Activated CD4-positive, alpha-beta T cell treated with anti-CD3 and anti-CD28 coated beads for 36 hours (primary cell): ENCODE measurements at regions of chr17 and their contacts with region 1.

Region 1: GRCh38 chr17:76737082-76737675 is at the start of gene SRSF2:
- DNase-seq: peak; percentile 99
- ATAC-seq: peak; percentile 75
- H3K4me3 Mint-ChIP-seq: peak within 1 kb of the TSS; percentile 85
- H3K27ac Mint-ChIP-seq: peak within 1 kb of the TSS; percentile 98
- H3K4me1 Mint-ChIP-seq: peaks cover 40% of the 10 kb centered on the region
- H3K27me3 Mint-ChIP-seq: no peaks in the 10 kb centered on the region
- total RNA-seq, gene SRSF2: 335 to 340 TPM

Region 2: DNA sequence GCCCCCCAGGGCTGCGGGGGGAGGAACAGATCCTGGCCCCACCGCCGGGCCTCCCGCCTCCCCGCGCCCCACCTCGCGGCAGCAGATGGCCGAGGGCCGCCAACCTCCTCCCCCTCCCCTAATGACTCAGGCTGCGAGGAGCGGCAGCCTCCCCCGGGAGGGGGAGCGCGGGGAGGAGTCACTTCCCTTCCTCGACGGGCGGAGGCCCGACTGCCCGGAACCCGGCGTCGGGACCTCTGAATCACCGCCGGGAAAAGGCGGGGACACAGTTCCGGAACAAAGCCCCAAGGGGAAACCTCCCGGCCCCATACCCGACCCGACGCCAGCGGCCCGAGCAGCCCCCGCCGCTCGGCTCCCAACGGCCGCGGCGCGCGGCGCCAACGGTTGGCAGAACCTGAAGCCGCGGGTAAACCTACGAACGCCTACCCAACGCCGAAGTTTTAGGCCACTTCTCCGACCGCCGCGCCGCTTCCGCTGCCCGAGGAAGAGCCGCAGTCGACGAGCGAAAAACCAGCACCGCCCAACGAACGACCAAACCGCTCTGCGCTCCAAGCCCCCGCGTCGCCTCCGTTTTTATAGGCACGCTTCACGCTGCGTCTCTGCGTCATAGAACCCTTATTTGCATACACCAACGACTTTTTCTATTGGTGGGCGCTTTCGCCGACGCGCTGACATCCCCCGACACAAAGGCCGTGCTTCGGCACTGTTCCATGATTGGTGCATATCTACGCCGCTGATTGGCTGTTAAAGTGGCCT is 957.8 kb before region 1 on chr17:
- CTCF ChIA-PET with region 1: no interaction called
- POLR2A ChIA-PET with region 1: no interaction called
- intact Hi-C with region 1: loop called (anchors 1 to 5 kb)
- DNase-seq: peak; percentile 96
- ATAC-seq: peak; percentile 69
- H3K4me3 Mint-ChIP-seq: peak overlapping the region; percentile 98
- H3K27ac Mint-ChIP-seq: peak overlapping the region; percentile 99
- H3K4me1 Mint-ChIP-seq: peaks cover 46% of the 10 kb centered on the region
- H3K27me3 Mint-ChIP-seq: peaks cover 1% of the 10 kb centered on the region

Region 3: DNA sequence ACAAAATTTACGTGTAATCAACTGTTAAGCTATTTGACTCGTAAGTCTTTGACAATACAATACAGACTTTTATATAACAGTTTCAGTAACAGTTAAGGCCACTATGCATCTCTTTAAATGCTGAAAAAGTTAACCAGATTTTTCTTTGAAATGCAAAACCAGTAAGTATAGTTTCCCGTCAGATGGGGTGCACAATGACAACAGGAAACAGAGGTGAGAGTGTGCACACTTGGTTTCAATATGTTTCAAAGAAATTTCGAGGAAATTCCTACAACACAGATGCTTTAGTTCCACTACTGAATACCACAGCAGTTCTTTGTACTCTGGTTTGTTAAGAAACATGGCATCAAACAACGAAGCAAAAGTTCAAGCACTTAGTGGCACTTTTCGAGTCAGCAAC is 545.3 kb before region 1 on chr17:
- CTCF ChIA-PET with region 1: no interaction called
- POLR2A ChIA-PET with region 1: no interaction called
- intact Hi-C with region 1: loop called in 1 of 2 experiments (anchors 5 kb)
- DNase-seq: peak; percentile 63
- ATAC-seq: peak; percentile 79
- H3K4me3 Mint-ChIP-seq: peak overlapping the region; percentile 61
- H3K27ac Mint-ChIP-seq: peak overlapping the region; percentile 96
- H3K4me1 Mint-ChIP-seq: peaks cover 80% of the 10 kb centered on the region
- H3K27me3 Mint-ChIP-seq: no peaks in the 10 kb centered on the region

Region 4: DNA sequence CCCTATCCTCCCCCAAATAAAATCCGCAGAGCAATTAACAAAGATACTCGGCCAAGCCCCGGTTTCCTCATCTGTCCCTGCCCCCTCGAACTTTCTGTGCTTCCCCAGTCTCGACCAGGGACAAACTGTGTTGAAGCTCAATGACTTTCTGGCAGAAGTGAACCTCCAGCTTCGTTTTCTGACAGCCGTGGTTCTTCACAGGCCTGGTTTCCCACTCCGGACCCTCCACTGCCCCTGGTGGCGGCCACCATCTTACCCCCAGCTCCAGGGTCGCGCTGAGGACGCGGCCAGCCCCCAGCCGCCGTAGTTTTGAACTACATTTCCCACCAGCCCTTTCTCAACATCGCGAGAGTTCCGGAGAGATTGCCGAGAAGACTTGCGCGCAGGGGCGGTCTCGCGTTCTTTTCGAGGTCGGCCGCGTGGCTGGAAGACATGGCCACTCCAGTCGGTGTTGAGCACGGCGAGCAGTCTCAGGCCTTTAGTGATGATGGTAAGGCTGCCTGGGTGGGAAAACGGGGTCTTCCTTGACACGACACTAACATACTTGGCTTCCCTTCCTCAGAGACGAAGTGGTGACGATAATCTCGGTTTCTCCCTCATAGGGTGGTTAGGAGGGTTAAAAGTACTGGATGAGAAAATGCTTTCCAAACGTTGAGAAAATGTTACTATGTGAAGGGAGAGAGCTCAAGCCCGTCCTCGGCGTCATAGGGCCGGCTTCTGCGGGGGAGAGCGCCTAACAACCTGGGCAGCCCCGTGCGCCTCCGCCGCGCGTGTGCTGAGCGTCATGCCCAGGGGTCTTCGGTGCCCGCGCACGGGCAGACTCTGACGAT is 179.6 kb before region 1 on chr17:
- CTCF ChIA-PET with region 1: interaction called, 5 read pairs
- POLR2A ChIA-PET with region 1: no interaction called
- intact Hi-C with region 1: loop called (anchors 1 to 5 kb)
- DNase-seq: peak; percentile 97
- ATAC-seq: peak; percentile 87
- H3K4me3 Mint-ChIP-seq: peak overlapping the region; percentile 100
- H3K27ac Mint-ChIP-seq: peak overlapping the region; percentile 99
- H3K4me1 Mint-ChIP-seq: peaks cover 50% of the 10 kb centered on the region
- H3K27me3 Mint-ChIP-seq: no peaks in the 10 kb centered on the region

Region 5: DNA sequence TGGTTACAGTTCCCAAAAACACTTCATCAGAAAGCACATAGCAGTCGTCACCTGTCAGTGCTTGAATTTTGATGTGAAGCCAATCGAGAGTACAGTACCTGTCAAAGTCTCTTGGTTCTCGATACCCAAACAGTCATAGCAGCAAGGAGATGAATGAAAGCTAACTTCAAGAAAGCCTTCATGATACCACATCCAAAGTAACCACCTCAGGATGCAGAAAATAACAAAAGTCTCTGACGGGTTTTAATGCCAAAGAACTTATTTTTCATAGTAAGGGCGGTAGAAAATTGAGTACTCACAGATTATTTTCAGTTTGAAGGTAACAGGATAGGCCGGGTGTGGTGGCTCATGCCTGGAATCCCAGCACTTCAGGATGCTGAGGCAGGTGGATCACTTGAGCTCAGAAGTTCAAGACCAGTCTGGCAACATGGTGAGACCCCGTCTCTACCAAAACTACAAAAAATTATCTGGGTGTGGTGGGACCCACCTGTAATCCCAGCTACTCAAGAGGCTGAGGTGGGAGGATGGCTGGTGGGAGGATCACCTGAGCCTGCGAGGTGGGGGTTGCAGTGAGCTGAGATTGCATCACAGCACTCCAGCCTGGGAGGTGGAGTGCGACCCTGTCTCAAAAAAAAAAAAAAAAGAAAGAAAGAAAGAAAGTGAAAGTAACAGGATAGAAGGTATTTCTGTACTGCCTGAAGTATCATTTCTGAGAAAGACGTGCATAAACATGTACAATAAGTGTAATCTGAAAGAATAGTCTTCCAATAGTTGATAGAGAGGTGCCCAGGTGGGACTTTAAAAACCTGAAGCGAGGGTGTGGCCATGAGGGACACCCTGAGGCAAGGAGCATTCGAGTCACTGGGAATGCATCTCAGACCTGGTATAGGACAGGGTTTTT is 16.1 kb after region 1 on chr17:
- CTCF ChIA-PET with region 1: interaction called, 5 read pairs
- POLR2A ChIA-PET with region 1: interaction called, 16 read pairs
- intact Hi-C with region 1: loop called (anchors 1 to 2 kb)
- DNase-seq: peak; percentile 43
- ATAC-seq: peak; percentile 90
- H3K4me3 Mint-ChIP-seq: peak overlapping the region; percentile 82
- H3K27ac Mint-ChIP-seq: peak overlapping the region; percentile 97
- H3K4me1 Mint-ChIP-seq: peaks cover 23% of the 10 kb centered on the region
- H3K27me3 Mint-ChIP-seq: no peaks in the 10 kb centered on the region

Region 6: DNA sequence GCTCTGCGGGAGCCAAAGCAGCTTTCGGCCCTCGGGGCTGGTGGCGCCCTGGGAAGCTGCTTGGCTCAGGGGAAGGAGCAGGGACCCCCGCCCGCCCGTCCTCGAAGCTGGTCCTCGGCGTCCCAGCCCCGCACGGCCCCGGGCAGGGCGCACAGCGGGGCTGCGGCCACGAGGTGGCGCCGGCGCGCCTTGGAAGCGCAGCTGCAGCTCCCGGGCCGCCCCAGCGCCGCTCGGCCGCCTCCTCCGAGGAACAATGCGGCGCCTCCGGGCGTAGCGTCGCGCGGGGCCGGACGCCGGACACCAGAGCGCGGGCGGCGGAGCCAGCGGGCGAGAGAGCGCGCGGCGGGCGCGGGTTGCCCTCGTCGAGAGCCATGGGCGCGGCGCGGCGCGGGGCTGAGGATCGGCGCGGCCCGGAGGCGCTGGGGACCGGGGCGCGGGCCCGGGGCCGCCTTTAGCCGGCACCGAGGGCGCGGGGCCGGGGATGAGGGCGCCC is 131.0 kb after region 1 on chr17 and contains the start of gene MGAT5B:
- CTCF ChIA-PET with region 1: no interaction called
- POLR2A ChIA-PET with region 1: no interaction called
- intact Hi-C with region 1: no loop called
- DNase-seq: peak; percentile 87
- ATAC-seq: peak; percentile 96
- H3K4me3 Mint-ChIP-seq: peak within 1 kb of the TSS; percentile 41
- H3K27ac Mint-ChIP-seq: no peak within 1 kb of the TSS
- H3K4me1 Mint-ChIP-seq: peaks cover 11% of the 10 kb centered on the region
- H3K27me3 Mint-ChIP-seq: peaks cover 23% of the 10 kb centered on the region
- total RNA-seq, gene MGAT5B: not detected

Region 7: GRCh38 chr17:77140166-77140878 is 403.1 kb after region 1 on chr17:
- CTCF ChIA-PET with region 1: no interaction called
- POLR2A ChIA-PET with region 1: no interaction called
- intact Hi-C with region 1: loop called (anchors 1 to 5 kb)
- DNase-seq: peak; percentile 100
- ATAC-seq: peak; percentile 79
- H3K4me3 Mint-ChIP-seq: peak overlapping the region; percentile 68
- H3K27ac Mint-ChIP-seq: peak overlapping the region; percentile 93
- H3K4me1 Mint-ChIP-seq: peaks cover 51% of the 10 kb centered on the region
- H3K27me3 Mint-ChIP-seq: no peaks in the 10 kb centered on the region

Region 8: DNA sequence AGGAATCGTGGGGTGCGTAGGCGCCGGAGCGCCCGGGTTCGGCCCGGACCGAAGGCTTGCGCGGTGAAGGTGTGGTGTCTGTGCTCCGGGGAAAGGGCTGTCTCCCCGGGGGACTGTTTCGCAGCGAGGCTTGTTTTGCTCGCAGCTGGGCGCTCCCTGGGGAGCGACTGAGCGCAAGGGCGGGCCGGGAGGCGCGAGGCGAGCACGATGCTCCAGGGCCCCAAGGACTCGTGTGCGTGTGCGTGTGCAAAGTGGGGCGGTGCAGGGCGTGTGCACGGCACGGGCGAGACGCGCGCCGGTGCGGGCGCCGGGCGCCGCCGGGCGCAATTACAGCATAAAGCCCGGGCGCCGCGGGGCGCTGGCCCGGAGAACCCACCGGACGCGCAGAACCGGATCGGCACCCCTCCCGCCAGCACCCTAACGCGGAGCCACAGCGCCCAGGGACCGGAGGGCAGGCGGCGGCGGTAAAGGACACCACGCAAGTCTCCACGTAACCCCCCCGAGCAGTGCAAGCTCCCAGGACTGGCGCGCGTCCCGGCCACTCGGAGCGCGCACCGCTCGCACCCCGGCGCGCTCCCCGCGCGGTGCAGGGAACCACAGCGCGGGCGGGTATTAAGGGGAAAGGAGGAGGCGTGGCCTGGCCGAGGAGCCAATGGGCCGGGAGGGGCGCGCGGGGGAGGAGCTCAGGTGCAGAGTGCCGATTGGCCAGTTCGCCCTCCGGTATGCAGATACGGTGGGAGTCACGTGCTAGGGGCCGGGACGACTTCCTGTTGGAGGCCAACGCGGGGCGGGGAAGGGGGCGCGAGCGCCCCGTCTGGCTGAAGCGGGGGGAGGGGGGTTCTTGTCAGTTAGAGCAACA is 1220.9 kb after region 1 on chr17 and contains the start of gene TNRC6C:
- CTCF ChIA-PET with region 1: no interaction called
- POLR2A ChIA-PET with region 1: no interaction called
- intact Hi-C with region 1: loop called in 1 of 2 experiments (anchors 1 kb)
- DNase-seq: peak; percentile 100
- ATAC-seq: peak; percentile 92
- H3K4me3 Mint-ChIP-seq: peak within 1 kb of the TSS; percentile 92
- H3K27ac Mint-ChIP-seq: peak within 1 kb of the TSS; percentile 95
- H3K4me1 Mint-ChIP-seq: peaks cover 34% of the 10 kb centered on the region
- H3K27me3 Mint-ChIP-seq: peaks cover 4% of the 10 kb centered on the region
- total RNA-seq, gene TNRC6C: 19.6 to 20.3 TPM